Caco-2 (cell line): ENCODE measurements at regions of chr10 and their contacts with region 1.

Region 1: GRCh38 chr10:5623081-5623748 is 43.2 kb downstream of the ASB13 start:
- DNase-seq: peak; percentile 94 to 97
- H3K4me3 ChIP-seq: no peak overlapping the region
- H3K4me3 Mint-ChIP-seq: no peak overlapping the region
- H3K27ac Mint-ChIP-seq: peak overlapping the region; percentile 46
- H3K4me1 ChIP-seq: peaks cover 23% of the 10 kb centered on the region
- H3K4me1 Mint-ChIP-seq: peaks cover 20% of the 10 kb centered on the region
- H3K27me3 ChIP-seq: no peaks in the 10 kb centered on the region
- H3K27me3 Mint-ChIP-seq: no peaks in the 10 kb centered on the region
- CTCF ChIP-seq: peak; percentile 97

Region 2: DNA sequence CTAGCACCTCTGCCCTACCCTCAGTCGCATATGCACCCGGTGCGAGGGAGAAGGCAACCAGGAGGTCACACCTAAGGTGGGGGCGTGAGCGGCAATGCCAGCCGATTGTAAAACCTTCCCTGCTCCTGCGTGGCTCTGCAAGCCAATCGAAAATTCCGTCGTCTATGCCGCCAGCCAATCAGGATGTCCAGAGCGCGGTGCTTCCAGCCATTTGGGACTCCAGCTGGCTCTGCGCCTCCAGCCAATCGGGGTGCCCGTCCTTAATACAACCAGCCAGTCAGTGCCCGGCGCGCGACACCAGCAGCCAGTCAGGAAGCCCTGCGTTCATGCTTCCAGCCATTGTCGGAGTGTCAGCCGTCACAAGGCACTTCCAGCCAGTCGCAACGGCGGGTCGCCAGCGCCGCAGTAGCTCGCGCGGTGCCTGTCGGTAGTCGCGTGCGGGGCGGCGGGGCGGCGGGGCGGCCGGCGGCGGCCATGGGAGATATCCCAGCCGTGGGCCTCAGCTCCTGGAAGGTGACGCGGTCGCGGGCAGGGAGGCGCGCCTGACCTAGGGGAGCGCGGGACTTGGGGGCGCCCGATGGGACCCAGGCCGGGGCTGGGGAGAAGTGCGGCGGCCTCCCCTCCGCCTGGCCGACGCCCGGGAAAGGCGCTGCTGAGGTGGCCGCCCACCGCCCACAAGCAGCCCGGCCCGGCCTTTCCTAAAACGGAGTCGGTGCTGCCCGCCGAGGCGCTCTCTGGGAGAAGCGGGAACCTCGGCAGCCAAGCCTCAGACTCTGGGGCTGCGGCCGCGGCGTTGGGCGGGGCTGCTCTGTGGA is 797.2 kb before region 1 on chr10 and contains the start of gene AKR1E2:
- CTCF ChIA-PET with region 1: no interaction called
- POLR2A ChIA-PET with region 1: no interaction called
- intact Hi-C with region 1: loop called (anchors 10 kb)
- DNase-seq: peak; percentile 100
- H3K4me3 ChIP-seq: peak within 1 kb of the TSS; percentile 56
- H3K4me3 Mint-ChIP-seq: peak within 1 kb of the TSS; percentile 98
- H3K27ac Mint-ChIP-seq: peak within 1 kb of the TSS; percentile 94
- H3K4me1 ChIP-seq: peaks cover 19% of the 10 kb centered on the region
- H3K4me1 Mint-ChIP-seq: peaks cover 12% of the 10 kb centered on the region
- H3K27me3 ChIP-seq: no peaks in the 10 kb centered on the region
- H3K27me3 Mint-ChIP-seq: peaks cover 5% of the 10 kb centered on the region
- CTCF ChIP-seq: no peak
- total RNA-seq, gene AKR1E2: 68.3 and 68.5 TPM in 2 replicates

Region 3: GRCh38 chr10:5385224-5385623 is 238.0 kb before region 1 on chr10:
- CTCF ChIA-PET with region 1: no interaction called
- POLR2A ChIA-PET with region 1: no interaction called
- intact Hi-C with region 1: no loop called
- DNase-seq: no peak
- H3K4me3 ChIP-seq: no peak overlapping the region
- H3K4me3 Mint-ChIP-seq: no peak overlapping the region
- H3K27ac Mint-ChIP-seq: no peak overlapping the region
- H3K4me1 ChIP-seq: no peaks in the 10 kb centered on the region
- H3K4me1 Mint-ChIP-seq: no peaks in the 10 kb centered on the region
- H3K27me3 ChIP-seq: no peaks in the 10 kb centered on the region
- H3K27me3 Mint-ChIP-seq: no peaks in the 10 kb centered on the region
- CTCF ChIP-seq: no peak

Region 4: GRCh38 chr10:5434017-5434753 is 189.0 kb before region 1 on chr10:
- CTCF ChIA-PET with region 1: interaction called, 10 read pairs
- POLR2A ChIA-PET with region 1: no interaction called
- intact Hi-C with region 1: no loop called
- DNase-seq: peak in 1 of 2 experiments; percentile 66
- H3K4me3 ChIP-seq: no peak overlapping the region
- H3K4me3 Mint-ChIP-seq: no peak overlapping the region
- H3K27ac Mint-ChIP-seq: no peak overlapping the region
- H3K4me1 ChIP-seq: no peaks in the 10 kb centered on the region
- H3K4me1 Mint-ChIP-seq: peaks cover 17% of the 10 kb centered on the region
- H3K27me3 ChIP-seq: no peaks in the 10 kb centered on the region
- H3K27me3 Mint-ChIP-seq: no peaks in the 10 kb centered on the region
- CTCF ChIP-seq: peak; percentile 81 to 86

Region 5: GRCh38 chr10:5466418-5467154 is 156.6 kb before region 1 on chr10:
- CTCF ChIA-PET with region 1: interaction called, 19 read pairs
- POLR2A ChIA-PET with region 1: interaction called, 3 read pairs
- intact Hi-C with region 1: no loop called
- DNase-seq: peak in 1 of 2 experiments; percentile 45
- H3K4me3 ChIP-seq: no peak overlapping the region
- H3K4me3 Mint-ChIP-seq: no peak overlapping the region
- H3K27ac Mint-ChIP-seq: peak overlapping the region; percentile 40
- H3K4me1 ChIP-seq: peaks cover 39% of the 10 kb centered on the region
- H3K4me1 Mint-ChIP-seq: peaks cover 21% of the 10 kb centered on the region
- H3K27me3 ChIP-seq: no peaks in the 10 kb centered on the region
- H3K27me3 Mint-ChIP-seq: no peaks in the 10 kb centered on the region
- CTCF ChIP-seq: no peak

Region 6: GRCh38 chr10:5502903-5503835 is 120.0 kb before region 1 on chr10:
- CTCF ChIA-PET with region 1: interaction called, 10 read pairs
- POLR2A ChIA-PET with region 1: interaction called, 4 read pairs
- intact Hi-C with region 1: loop called (anchors 1 kb)
- DNase-seq: peak; percentile 83 to 84
- H3K4me3 ChIP-seq: no peak overlapping the region
- H3K4me3 Mint-ChIP-seq: peak overlapping the region; percentile 25
- H3K27ac Mint-ChIP-seq: peak overlapping the region; percentile 84
- H3K4me1 ChIP-seq: peaks cover 32% of the 10 kb centered on the region
- H3K4me1 Mint-ChIP-seq: peaks cover 38% of the 10 kb centered on the region
- H3K27me3 ChIP-seq: no peaks in the 10 kb centered on the region
- H3K27me3 Mint-ChIP-seq: no peaks in the 10 kb centered on the region
- CTCF ChIP-seq: no peak

Region 7: GRCh38 chr10:5539700-5540485 is 83.3 kb before region 1 on chr10:
- CTCF ChIA-PET with region 1: no interaction called
- POLR2A ChIA-PET with region 1: no interaction called
- intact Hi-C with region 1: no loop called
- DNase-seq: peak in 1 of 2 experiments; percentile 13
- H3K4me3 ChIP-seq: no peak overlapping the region
- H3K4me3 Mint-ChIP-seq: no peak overlapping the region
- H3K27ac Mint-ChIP-seq: peak overlapping the region; percentile 55
- H3K4me1 ChIP-seq: peaks cover 34% of the 10 kb centered on the region
- H3K4me1 Mint-ChIP-seq: peaks cover 21% of the 10 kb centered on the region
- H3K27me3 ChIP-seq: no peaks in the 10 kb centered on the region
- H3K27me3 Mint-ChIP-seq: no peaks in the 10 kb centered on the region
- CTCF ChIP-seq: no peak

Region 8: DNA sequence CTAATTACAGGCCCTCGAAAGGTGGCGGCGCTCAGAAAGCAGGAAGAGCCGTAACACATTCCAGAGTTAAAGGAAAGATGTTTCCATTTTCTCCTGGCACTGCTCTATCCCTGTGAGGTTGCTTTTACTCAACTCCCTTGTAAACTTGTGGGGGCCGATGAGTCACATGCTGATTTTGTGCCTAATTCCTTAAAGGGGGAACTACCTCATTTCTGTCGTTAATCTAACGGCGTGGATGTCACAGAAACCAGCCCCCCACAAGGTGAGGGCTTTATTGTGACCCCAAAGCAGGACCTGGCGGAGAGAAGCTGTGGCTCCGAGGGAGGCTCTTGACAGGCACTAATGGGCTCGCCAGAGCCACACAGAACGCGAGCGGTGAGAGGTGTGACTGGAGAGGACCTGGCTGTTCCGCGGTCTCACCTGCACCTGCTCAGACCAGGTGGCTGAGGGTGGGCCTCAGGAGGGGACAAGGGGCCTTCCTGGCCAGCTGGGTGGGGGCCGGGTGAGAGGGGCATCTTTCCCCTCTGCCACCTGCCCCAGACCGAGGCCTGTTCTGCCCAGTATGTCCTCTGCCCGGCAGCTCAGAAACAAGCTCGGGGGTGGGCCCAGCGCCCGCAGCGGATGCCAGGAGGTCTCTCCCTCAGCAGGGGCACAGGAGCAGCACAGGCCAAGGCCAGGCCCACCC is 47.6 kb before region 1 on chr10:
- CTCF ChIA-PET with region 1: no interaction called
- POLR2A ChIA-PET with region 1: no interaction called
- intact Hi-C with region 1: loop called (anchors 2 kb)
- DNase-seq: no peak
- H3K4me3 ChIP-seq: no peak overlapping the region
- H3K4me3 Mint-ChIP-seq: no peak overlapping the region
- H3K27ac Mint-ChIP-seq: peak overlapping the region; percentile 93
- H3K4me1 ChIP-seq: peaks cover 51% of the 10 kb centered on the region
- H3K4me1 Mint-ChIP-seq: peaks cover 27% of the 10 kb centered on the region
- H3K27me3 ChIP-seq: no peaks in the 10 kb centered on the region
- H3K27me3 Mint-ChIP-seq: no peaks in the 10 kb centered on the region
- CTCF ChIP-seq: no peak

Region 9: DNA sequence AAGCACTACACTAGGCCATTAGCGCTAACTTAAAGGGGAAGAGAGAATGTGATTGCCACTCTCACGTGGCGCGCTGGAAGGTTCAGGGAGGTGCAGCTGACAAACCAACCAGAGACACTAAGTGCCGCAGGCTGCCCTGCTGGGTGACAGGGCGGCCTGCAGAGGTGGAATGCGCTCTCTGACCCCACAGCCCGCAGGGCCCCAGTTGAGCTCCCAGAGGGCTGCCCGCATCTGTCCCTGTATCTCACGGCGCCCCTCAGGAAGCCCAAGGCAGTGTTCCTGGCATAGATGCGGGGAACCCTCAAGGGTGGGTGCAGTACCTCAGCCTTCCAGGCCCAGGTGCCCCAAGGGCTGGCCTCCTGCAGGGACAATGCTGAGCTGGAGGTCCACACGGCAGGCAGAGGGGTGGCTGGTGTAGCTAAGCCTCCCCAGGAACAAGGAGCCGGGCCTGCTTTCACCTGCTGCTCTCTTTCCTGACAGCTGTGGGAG is 31.8 kb before region 1 on chr10:
- CTCF ChIA-PET with region 1: interaction called, 14 read pairs
- POLR2A ChIA-PET with region 1: no interaction called
- intact Hi-C with region 1: no loop called
- DNase-seq: peak; percentile 73 to 82
- H3K4me3 ChIP-seq: no peak overlapping the region
- H3K4me3 Mint-ChIP-seq: no peak overlapping the region
- H3K27ac Mint-ChIP-seq: peak overlapping the region; percentile 12
- H3K4me1 ChIP-seq: peaks cover 52% of the 10 kb centered on the region
- H3K4me1 Mint-ChIP-seq: peaks cover 38% of the 10 kb centered on the region
- H3K27me3 ChIP-seq: no peaks in the 10 kb centered on the region
- H3K27me3 Mint-ChIP-seq: no peaks in the 10 kb centered on the region
- CTCF ChIP-seq: no peak